Transverse colon (tissue), 4 donors: ENCODE measurements at regions of chr7 and their contacts with region 1.

Region 1: DNA sequence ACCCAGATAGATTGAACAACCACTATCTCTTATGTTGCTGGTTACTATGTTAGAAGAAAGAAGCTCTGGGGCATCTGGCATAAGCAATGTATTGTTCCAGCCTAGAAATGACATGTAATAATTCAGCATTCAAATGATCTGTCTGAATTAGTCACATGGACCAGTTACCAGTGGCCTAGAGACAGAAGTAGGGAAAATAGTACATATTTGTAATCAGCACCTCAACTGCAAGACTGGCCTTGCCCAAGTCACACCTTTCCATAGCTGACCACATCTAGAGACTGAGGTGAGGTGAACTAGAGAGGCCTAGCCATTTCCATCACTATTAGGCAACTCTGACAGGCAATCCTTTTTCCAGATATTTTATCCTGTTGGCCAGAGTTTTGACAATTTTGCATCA is 315.6 kb upstream of the KCND2 start:
- DNase-seq: no peak
- H3K4me3 ChIP-seq: no peak overlapping the region
- H3K27ac ChIP-seq: no peak overlapping the region
- H3K4me1 ChIP-seq: no peaks in the 10 kb centered on the region
- H3K27me3 ChIP-seq: no peaks in the 10 kb centered on the region
- CTCF ChIP-seq: no peak
- EP300 ChIP-seq: no peak
- POLR2A ChIP-seq: no peak

Region 2: GRCh38 chr7:120783721-120784120 is 826.4 kb after region 1 on chr7:
- in situ Hi-C with region 1: no loop called
- intact Hi-C with region 1: loop called (anchors 5 kb)
- DNase-seq: no peak
- H3K4me3 ChIP-seq: no peak overlapping the region
- H3K27ac ChIP-seq: no peak overlapping the region
- H3K4me1 ChIP-seq: no peaks in the 10 kb centered on the region
- H3K27me3 ChIP-seq: no peaks in the 10 kb centered on the region
- CTCF ChIP-seq: no peak
- EP300 ChIP-seq: no peak
- POLR2A ChIP-seq: no peak